Naive thymus-derived CD8-positive, alpha-beta T cell (primary cell): ENCODE measurements at regions of chr17 and their contacts with region 1.

Region 1: GRCh38 chr17:38868817-38869525 is 887 bp upstream of the LASP1 start:
- DNase-seq: peak; percentile 69 to 93 (median 90)
- ATAC-seq: peak; percentile 52 to 70
- H3K4me3 Mint-ChIP-seq: peak overlapping the region; percentile 94 to 100 (median 98)
- H3K27ac Mint-ChIP-seq: peak overlapping the region; percentile 92 to 100 (median 96)
- H3K4me1 Mint-ChIP-seq: peaks cover 34 to 55% (median 47%) of the 10 kb centered on the region in 4 donors
- H3K27me3 Mint-ChIP-seq: peaks cover 0 to 1% (median 0%) of the 10 kb centered on the region in 5 donors

Region 2: GRCh38 chr17:38768417-38768816 is 100.6 kb before region 1 on chr17:
- POLR2A ChIA-PET with region 1: no interaction called
- DNase-seq: no peak
- ATAC-seq: no peak
- H3K4me3 Mint-ChIP-seq: no peak overlapping the region
- H3K27ac Mint-ChIP-seq: peak overlapping the region in 2 of 10 donors; percentile 11 to 55
- H3K4me1 Mint-ChIP-seq: peaks cover 1 to 15% (median 8%) of the 10 kb centered on the region in 4 donors
- H3K27me3 Mint-ChIP-seq: no peaks in the 10 kb centered on the region

Region 3: GRCh38 chr17:38779965-38780752 is 88.8 kb before region 1 on chr17:
- POLR2A ChIA-PET with region 1: no interaction called
- DNase-seq: no peak
- ATAC-seq: no peak
- H3K4me3 Mint-ChIP-seq: no peak overlapping the region
- H3K27ac Mint-ChIP-seq: peak overlapping the region in 3 of 10 donors; percentile 19 to 31 (median 28)
- H3K4me1 Mint-ChIP-seq: peaks cover 0 to 8% (median 4%) of the 10 kb centered on the region in 4 donors
- H3K27me3 Mint-ChIP-seq: no peaks in the 10 kb centered on the region

Region 4: GRCh38 chr17:38824899-38825761 is 43.8 kb before region 1 on chr17 and contains the start of gene CWC25:
- POLR2A ChIA-PET with region 1: interaction called, 46 read pairs
- DNase-seq: peak; percentile 84 to 100 (median 96)
- ATAC-seq: peak; percentile 81 to 86
- H3K4me3 Mint-ChIP-seq: peak within 1 kb of the TSS; percentile 93 to 99 (median 97)
- H3K27ac Mint-ChIP-seq: peak within 1 kb of the TSS; percentile 97 to 100 (median 100)
- H3K4me1 Mint-ChIP-seq: peaks cover 24 to 44% (median 37%) of the 10 kb centered on the region in 4 donors
- H3K27me3 Mint-ChIP-seq: peaks cover 0 to 6% (median 0%) of the 10 kb centered on the region in 5 donors
- polyA plus RNA-seq, gene CWC25: 6.3 to 7.4 (median 6.4) TPM

Region 5: DNA sequence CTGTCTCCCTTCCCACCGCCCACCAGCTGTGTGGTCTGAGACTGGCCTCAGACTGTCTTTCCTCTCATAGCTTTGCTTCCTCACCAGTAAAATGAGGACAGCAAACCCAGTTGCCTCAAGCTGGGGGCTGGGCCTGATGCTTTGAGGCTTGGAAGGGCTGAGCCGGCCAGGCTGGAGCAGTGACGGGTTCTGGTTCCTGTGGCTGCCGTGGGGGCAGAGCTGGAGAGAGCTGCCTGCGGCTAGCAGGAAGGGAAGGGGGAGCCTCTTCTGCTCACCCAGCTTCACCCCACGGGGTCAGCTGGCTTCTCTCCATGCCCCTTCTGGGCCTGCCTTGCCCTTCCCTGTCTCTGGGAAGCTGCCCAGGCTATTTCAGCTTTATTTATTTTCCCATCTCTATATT is 24.6 kb after region 1 on chr17:
- POLR2A ChIA-PET with region 1: interaction called, 159 read pairs
- DNase-seq: peak in 1 of 10 donors; percentile 44
- ATAC-seq: peak in 1 of 2 donors; percentile 18
- H3K4me3 Mint-ChIP-seq: peak overlapping the region in 7 of 10 donors; percentile 7 to 75 (median 55)
- H3K27ac Mint-ChIP-seq: peak overlapping the region; percentile 66 to 99 (median 92)
- H3K4me1 Mint-ChIP-seq: peaks cover 34 to 90% (median 85%) of the 10 kb centered on the region in 4 donors
- H3K27me3 Mint-ChIP-seq: no peaks in the 10 kb centered on the region

Region 6: GRCh38 chr17:38922538-38923297 is 53.7 kb after region 1 on chr17:
- POLR2A ChIA-PET with region 1: interaction called, 17 read pairs
- DNase-seq: no peak
- ATAC-seq: no peak
- H3K4me3 Mint-ChIP-seq: no peak overlapping the region
- H3K27ac Mint-ChIP-seq: peak overlapping the region in 8 of 10 donors; percentile 8 to 92 (median 71)
- H3K4me1 Mint-ChIP-seq: peaks cover 30 to 47% (median 40%) of the 10 kb centered on the region in 4 donors
- H3K27me3 Mint-ChIP-seq: no peaks in the 10 kb centered on the region

Region 7: DNA sequence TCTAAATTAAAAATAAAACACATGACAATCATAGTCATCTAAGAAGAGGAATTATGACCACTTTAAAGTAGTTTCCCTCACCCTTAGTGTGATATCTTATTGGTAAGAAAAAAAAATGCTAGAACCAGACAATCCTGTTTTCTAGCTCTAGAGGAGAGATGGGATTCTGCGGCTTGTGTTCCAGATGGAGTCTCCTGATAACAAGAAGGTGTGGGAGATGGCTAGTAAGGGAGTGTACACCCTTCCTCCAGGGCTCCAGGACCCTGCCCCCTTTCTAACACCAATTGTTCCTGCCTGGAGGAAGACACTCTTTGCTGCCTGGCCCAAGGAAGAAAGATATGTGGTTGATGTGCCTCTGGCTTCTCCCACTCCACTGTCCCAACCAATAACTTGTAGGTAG is 167.0 kb after region 1 on chr17:
- POLR2A ChIA-PET with region 1: no interaction called
- DNase-seq: no peak
- ATAC-seq: no peak
- H3K4me3 Mint-ChIP-seq: no peak overlapping the region
- H3K27ac Mint-ChIP-seq: peak overlapping the region in 1 of 10 donors; percentile 56
- H3K4me1 Mint-ChIP-seq: no peaks in the 10 kb centered on the region
- H3K27me3 Mint-ChIP-seq: peaks cover 4 to 17% (median 13%) of the 10 kb centered on the region in 5 donors